ENCODE measurements at regions of chr15 and their contacts with region 1.

Region 1: GRCh38 chr15:90233376-90234095 is at the start of gene CIB1:
- DNase-seq: peak; percentile 92
- ATAC-seq: peak; percentile 86
- H3K4me3 Mint-ChIP-seq: peak within 1 kb of the TSS; percentile 87
- H3K27ac Mint-ChIP-seq: peak within 1 kb of the TSS; percentile 97
- H3K4me1 Mint-ChIP-seq: peaks cover 50% of the 10 kb centered on the region
- H3K27me3 Mint-ChIP-seq: no peaks in the 10 kb centered on the region
- CTCF ChIP-seq: no peak
- total RNA-seq, gene CIB1: 96.6 and 105 TPM in 2 replicates

Region 2: GRCh38 chr15:89893696-89894455 is 339.7 kb before region 1 on chr15 and contains the start of gene AP3S2:
- CTCF ChIA-PET with region 1: no interaction called
- POLR2A ChIA-PET with region 1: no interaction called
- intact Hi-C with region 1: loop called (anchors 1 kb)
- DNase-seq: peak; percentile 82
- ATAC-seq: peak; percentile 89
- H3K4me3 Mint-ChIP-seq: peak within 1 kb of the TSS; percentile 95
- H3K27ac Mint-ChIP-seq: peak within 1 kb of the TSS; percentile 94
- H3K4me1 Mint-ChIP-seq: peaks cover 40% of the 10 kb centered on the region
- H3K27me3 Mint-ChIP-seq: no peaks in the 10 kb centered on the region
- CTCF ChIP-seq: no peak
- total RNA-seq, gene AP3S2: 31.8 and 36.4 TPM in 2 replicates

Region 3: DNA sequence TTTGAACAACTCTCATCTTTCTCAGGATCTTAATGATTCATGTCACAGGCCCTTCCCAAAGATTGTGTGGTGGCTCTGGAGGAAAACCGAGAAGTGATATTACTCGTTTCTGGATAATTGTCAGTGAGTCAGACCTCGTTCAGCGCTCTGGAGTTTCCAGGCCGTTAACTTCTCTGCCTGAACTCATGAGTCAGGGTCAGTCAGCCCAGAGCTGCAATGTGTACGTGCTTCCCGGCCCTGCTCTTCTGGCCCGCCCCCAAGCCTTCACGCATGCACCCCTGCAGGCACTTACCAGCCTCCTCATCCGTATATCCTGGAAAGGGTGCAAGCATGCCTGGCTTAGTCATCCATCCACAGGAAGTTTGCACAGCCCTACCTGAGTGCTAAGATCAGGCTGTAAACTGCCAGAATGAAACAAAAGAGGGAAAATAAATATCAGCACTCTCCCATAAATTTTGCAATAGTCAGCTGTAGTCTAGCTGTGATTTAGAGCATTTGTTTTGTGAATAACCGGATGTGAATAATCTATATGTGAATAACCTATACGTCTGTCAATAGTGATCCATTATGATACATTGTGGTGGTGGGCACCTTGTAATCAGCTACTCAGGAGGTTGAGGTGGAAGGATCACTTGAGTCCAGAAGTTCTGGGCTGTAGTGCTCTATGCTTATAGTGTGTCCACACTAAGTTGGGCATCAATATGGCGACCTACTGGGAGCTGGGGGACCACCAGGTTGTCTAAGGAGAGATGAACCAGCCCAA is 67.7 kb before region 1 on chr15:
- CTCF ChIA-PET with region 1: interaction called, 12 read pairs
- POLR2A ChIA-PET with region 1: interaction called, 14 read pairs
- intact Hi-C with region 1: loop called (anchors 1 kb)
- DNase-seq: no peak
- ATAC-seq: peak; percentile 75
- H3K4me3 Mint-ChIP-seq: peak overlapping the region; percentile 44
- H3K27ac Mint-ChIP-seq: peak overlapping the region; percentile 56
- H3K4me1 Mint-ChIP-seq: peaks cover 49% of the 10 kb centered on the region
- H3K27me3 Mint-ChIP-seq: no peaks in the 10 kb centered on the region
- CTCF ChIP-seq: no peak

Region 4: DNA sequence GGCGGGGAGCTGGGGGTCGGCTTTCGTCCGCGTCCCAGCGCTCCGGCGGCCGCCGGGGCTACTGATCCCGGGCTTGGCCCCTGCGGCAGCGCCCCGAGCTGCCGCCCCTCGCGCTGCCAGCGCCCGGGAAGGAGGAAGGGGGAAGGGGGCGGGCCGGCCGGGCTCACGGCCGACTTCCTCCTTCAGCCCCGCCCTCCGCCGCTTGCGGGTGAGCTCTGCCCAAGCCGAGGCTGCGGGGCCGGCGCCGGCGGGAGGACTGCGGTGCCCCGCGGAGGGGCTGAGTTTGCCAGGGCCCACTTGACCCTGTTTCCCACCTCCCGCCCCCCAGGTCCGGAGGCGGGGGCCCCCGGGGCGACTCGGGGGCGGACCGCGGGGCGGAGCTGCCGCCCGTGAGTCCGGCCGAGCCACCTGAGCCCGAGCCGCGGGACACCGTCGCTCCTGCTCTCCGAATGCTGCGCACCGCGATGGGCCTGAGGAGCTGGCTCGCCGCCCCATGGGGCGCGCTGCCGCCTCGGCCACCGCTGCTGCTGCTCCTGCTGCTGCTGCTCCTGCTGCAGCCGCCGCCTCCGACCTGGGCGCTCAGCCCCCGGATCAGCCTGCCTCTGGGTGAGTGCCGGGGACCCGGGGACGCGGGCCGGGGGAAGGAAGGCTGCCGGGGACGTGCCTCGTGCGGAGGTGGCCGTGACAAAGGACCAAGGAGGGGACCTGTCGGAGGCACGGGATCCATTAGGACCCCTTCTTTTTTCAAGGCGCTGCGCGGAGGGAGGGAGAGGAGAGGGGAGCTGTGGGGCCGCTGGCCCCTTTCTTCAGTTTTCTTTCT is 32.2 kb before region 1 on chr15 and contains the start of gene SEMA4B:
- CTCF ChIA-PET with region 1: interaction called, 4 read pairs
- POLR2A ChIA-PET with region 1: interaction called, 50 read pairs
- intact Hi-C with region 1: loop called (anchors 2 kb)
- DNase-seq: peak; percentile 81
- ATAC-seq: peak; percentile 90
- H3K4me3 Mint-ChIP-seq: peak within 1 kb of the TSS; percentile 93
- H3K27ac Mint-ChIP-seq: peak within 1 kb of the TSS; percentile 93
- H3K4me1 Mint-ChIP-seq: peaks cover 77% of the 10 kb centered on the region
- H3K27me3 Mint-ChIP-seq: no peaks in the 10 kb centered on the region
- CTCF ChIP-seq: no peak
- total RNA-seq, gene SEMA4B: 68.1 and 85.1 TPM in 2 replicates

Region 5: DNA sequence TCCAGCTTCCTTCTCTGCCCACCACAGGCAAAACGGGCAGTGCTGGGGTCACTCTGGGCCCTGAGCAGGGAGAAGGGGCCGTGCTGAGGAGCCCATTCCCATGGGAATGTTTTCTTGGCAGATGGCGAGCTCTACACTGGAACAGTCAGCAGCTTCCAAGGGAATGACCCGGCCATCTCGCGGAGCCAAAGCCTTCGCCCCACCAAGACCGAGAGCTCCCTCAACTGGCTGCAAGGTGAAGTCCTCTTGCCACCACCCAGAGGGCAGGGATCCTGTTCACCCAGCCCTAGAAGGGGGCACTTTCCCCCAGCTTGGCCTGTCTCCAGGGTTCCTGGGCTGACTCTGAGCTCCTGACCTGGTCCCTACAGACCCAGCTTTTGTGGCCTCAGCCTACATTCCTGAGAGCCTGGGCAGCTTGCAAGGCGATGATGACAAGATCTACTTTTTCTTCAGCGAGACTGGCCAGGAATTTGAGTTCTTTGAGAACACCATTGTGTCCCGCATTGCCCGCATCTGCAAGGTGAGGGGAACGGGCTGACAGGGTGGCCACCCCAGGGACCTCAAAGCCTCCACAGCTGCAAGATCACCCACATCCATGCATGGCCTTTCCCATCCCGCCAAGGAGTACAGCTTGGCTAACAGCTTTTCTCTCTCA is 12.2 kb before region 1 on chr15:
- CTCF ChIA-PET with region 1: interaction called, 44 read pairs
- POLR2A ChIA-PET with region 1: interaction called, 21 read pairs
- intact Hi-C with region 1: loop called (anchors 1 kb)
- DNase-seq: no peak
- ATAC-seq: peak; percentile 43
- H3K4me3 Mint-ChIP-seq: no peak overlapping the region
- H3K27ac Mint-ChIP-seq: peak overlapping the region; percentile 56
- H3K4me1 Mint-ChIP-seq: peaks cover 49% of the 10 kb centered on the region
- H3K27me3 Mint-ChIP-seq: no peaks in the 10 kb centered on the region
- CTCF ChIP-seq: no peak

Region 6: DNA sequence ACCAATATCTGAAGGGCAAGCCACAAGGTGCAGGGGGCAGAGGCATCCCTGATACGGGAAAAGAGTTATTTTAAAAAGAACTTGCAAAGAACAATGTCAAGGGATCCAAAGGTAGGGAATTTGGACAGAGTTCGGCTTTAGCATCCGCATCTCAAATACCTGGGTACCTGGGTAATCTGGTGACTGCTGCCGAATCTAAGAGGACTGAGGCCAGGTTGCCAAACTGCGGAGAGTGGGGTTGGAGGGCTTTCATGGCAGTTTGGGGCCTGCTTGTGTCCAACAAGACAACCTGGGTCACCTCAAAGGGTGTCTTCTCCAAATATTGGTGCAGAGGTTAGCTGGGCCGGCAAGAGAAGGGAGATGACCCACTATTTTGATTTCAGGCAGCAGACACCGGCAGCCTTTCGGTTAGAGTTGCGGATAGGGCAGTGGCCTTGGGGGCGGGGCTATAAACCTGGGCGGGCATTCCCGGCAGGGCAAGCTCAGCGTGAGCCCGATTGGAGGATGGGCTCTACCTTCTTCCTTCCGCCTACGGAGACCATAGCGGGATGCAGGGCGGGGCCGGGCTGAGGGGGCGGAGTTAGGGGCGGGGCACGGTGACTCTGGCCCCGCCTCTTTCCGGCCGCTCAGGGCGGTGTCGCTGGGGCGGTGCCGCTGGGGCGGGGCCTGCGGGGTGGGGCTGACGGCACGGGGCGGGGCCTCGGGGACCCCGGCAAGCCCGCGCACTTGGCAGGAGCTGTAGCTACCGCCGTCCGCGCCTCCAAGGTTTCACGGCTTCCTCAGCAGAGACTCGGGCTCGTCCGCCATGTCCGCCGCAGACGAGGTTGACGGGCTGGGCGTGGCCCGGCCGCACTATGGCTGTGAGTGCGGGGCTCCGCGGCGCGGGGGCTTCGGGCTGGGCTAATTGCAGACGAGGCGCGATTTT is 154.3 kb after region 1 on chr15 and contains the start of gene IQGAP1:
- CTCF ChIA-PET with region 1: no interaction called
- POLR2A ChIA-PET with region 1: interaction called, 13 read pairs
- intact Hi-C with region 1: loop called (anchors 2 kb)
- DNase-seq: peak; percentile 88
- ATAC-seq: peak; percentile 85
- H3K4me3 Mint-ChIP-seq: peak within 1 kb of the TSS; percentile 93
- H3K27ac Mint-ChIP-seq: peak within 1 kb of the TSS; percentile 95
- H3K4me1 Mint-ChIP-seq: peaks cover 47% of the 10 kb centered on the region
- H3K27me3 Mint-ChIP-seq: no peaks in the 10 kb centered on the region
- CTCF ChIP-seq: no peak
- total RNA-seq, gene IQGAP1: 187 and 227 TPM in 2 replicates